HepG2 (cell line): ENCODE measurements at regions of chr10 and their contacts with region 1.

Region 1: GRCh38 chr10:72331601-72332422 is 22.9 kb downstream of the DNAJB12 start:
- DNase-seq: peak; percentile 91
- ATAC-seq: peak; percentile 82
- H3K4me3 ChIP-seq: peak overlapping the region; percentile 13 to 65 (median 22); a peak in 4 of 6 replicates
- H3K27ac ChIP-seq: peak overlapping the region; percentile 91
- H3K4me1 ChIP-seq: peaks cover 95% of the 10 kb centered on the region
- H3K27me3 ChIP-seq: no peaks in the 10 kb centered on the region
- CTCF ChIP-seq: peak; percentile 54
- EP300 ChIP-seq: peak in 1 of 2 experiments; percentile 44; a peak in 1 of 4 replicates
- POLR2A ChIP-seq: no peak
- RAD21 ChIP-seq: no peak

Region 2: DNA sequence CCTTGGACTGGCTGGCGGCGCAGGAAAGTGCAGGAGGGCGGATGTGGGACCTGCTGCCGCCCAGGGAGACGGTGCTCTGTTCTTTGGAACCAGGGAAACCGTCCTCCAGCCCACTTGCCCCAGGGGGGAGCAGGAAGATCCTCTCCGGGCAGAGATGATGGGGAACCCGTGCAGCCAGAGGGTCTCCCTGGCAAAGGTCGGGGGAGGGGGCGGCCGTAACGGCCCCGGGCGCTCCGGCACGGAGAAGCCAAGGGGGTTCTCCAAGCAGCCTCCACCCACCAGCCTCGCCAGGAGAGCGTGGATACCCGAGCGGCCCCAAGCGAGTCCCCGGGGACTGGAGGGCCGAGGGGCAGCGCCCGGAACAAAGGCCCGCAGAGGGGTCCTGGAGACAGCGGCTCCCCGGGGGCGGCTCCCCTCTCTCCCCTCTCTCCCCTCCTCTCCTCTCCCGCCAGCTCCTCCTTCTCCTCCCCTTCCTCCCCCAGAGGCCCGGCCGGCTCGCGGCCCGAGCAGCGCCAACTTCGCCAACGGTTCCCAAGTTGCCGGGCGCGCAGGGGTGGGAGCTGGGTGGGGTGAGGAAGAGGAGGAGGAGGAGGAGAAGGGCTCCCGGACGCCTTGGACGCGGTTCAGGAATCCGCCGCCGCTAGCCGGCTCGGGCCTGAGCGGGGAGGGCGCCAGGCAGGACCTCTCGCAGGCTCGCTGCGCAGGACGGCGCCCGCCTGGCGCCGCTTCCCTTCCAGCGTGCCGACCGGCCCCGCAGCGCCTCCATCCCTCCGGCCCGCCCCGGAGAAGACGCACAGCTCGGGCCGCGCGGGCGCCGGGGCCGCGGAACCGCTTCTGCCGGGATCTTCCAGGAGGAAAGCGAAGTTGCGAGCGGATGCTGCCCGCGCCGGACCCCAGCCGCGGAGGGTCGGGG is 367.8 kb before region 1 on chr10 and contains the start of gene CHST3:
- CTCF ChIA-PET with region 1: no interaction called
- POLR2A ChIA-PET with region 1: no interaction called
- in situ Hi-C with region 1: loop called (anchors 10 kb)
- intact Hi-C with region 1: no loop called
- DNase-seq: no peak
- ATAC-seq: peak; percentile 81
- H3K4me3 ChIP-seq: peak within 1 kb of the TSS; percentile 78 to 95 (median 89)
- H3K27ac ChIP-seq: peak within 1 kb of the TSS; percentile 86
- H3K4me1 ChIP-seq: peaks cover 52% of the 10 kb centered on the region
- H3K27me3 ChIP-seq: peaks cover 0 to 4% of the 10 kb centered on the region in 2 experiments; a peak in 1 of 5 replicates
- CTCF ChIP-seq: no peak
- EP300 ChIP-seq: no peak
- POLR2A ChIP-seq: peak; percentile 7 to 15; a peak in 1 of 4 replicates
- RAD21 ChIP-seq: no peak
- total RNA-seq, gene CHST3: 13.4 and 18.7 TPM in 2 replicates

Region 3: GRCh38 chr10:72088889-72089575 is 242.8 kb before region 1 on chr10:
- CTCF ChIA-PET with region 1: no interaction called
- POLR2A ChIA-PET with region 1: no interaction called
- in situ Hi-C with region 1: loop called (anchors 25 kb)
- intact Hi-C with region 1: no loop called
- DNase-seq: peak; percentile 42
- ATAC-seq: peak; percentile 49
- H3K4me3 ChIP-seq: peak overlapping the region; percentile 51 to 70 (median 57)
- H3K27ac ChIP-seq: no peak overlapping the region
- H3K4me1 ChIP-seq: peaks cover 76% of the 10 kb centered on the region
- H3K27me3 ChIP-seq: peaks cover 0 to 25% of the 10 kb centered on the region in 2 experiments; a peak in 2 of 5 replicates
- CTCF ChIP-seq: no peak
- EP300 ChIP-seq: no peak
- POLR2A ChIP-seq: no peak
- RAD21 ChIP-seq: no peak

Region 4: DNA sequence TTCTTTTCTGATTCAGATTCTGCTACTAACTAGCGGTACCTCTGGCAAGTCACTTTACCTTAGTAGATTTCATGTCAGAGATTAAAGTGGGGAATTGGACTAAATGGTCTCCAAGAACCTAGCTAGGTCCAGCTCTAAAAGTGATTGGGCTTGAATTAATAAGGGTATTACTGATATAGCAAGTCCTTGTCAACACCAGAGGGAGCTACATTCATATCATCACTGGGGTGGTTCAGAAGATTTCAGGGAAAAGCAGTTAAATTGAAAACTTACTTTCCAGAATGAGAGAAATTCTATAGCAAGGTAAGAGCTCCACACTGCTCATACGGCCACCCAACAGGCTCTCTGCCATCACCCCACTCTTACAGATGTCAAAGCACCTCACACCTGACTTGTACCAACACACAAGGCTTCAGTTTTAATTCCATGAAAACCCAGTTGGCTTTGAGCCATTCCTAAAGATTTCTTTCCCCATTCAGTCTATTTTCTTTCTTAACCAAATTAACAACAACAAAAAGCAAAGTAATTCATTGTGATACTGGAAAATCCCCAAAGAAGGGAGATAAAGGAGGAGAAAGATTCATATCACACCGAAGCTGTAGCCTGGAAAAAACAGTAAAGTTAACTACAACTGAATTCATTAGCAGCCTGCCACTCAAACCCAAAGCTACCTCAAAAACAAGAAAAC is 205.5 kb before region 1 on chr10:
- CTCF ChIA-PET with region 1: interaction called, 7 read pairs
- POLR2A ChIA-PET with region 1: interaction called, 4 read pairs
- in situ Hi-C with region 1: no loop called
- intact Hi-C with region 1: loop called (anchors 1 kb)
- DNase-seq: peak; percentile 29
- ATAC-seq: no peak
- H3K4me3 ChIP-seq: no peak overlapping the region
- H3K27ac ChIP-seq: no peak overlapping the region
- H3K4me1 ChIP-seq: no peaks in the 10 kb centered on the region
- H3K27me3 ChIP-seq: no peaks in the 10 kb centered on the region
- CTCF ChIP-seq: peak; percentile 27; the same call in 1 of the 2 replicates
- EP300 ChIP-seq: no peak
- POLR2A ChIP-seq: no peak
- RAD21 ChIP-seq: peak; percentile 34; the same call in 1 of the 2 replicates

Region 5: DNA sequence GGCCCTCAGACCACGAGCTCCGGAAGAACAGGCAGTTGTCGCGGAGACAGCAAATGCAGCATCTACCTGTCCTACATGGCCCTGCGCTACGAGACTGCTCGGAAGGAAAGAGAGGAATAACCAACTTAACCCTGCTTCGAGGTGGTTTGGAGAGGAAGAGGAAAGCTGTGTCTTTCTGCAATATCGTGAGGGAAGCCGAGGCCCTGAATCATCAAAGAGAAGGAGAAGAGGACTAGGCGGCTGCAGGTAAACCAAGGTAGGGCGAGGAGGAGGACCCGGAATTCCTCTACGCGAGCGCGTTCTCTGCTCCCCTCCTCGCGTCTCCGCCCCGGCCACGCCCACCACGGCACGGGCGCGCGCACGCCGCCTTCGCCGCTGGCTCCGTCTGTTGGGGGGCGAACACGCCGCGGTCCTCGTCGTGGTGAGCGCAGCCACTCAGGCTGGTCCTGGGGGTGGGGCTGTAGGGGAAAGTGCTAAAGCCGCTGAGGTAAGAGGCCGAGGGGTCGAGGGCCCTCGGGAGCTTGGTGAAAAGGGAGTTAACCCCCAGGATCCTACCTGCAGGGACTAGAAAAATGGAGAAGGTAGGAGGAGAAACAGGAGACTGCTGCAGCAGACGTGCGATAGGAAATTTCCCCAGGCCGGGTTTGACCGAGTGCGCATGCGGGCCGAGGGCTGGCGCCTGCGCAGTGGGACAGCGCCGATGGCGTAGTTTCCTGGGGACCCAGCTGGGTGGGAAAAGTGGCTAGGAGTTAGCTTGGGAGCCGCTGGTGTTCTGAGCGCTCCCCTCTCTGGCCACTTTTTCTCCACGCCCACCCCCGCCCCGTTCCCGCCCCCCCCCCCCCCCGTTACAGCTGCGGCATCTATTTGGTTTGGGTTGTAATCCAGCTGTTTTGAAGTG is 115.9 kb before region 1 on chr10 and contains the starts of genes ANAPC16 and ASCC1:
- CTCF ChIA-PET with region 1: no interaction called
- POLR2A ChIA-PET with region 1: interaction called, 11 read pairs
- in situ Hi-C with region 1: no loop called
- intact Hi-C with region 1: loop called (anchors 10 kb)
- DNase-seq: peak; percentile 85
- ATAC-seq: peak; percentile 93
- H3K4me3 ChIP-seq: peak within 1 kb of the TSS; percentile 82 to 98 (median 83)
- H3K27ac ChIP-seq: peak within 1 kb of the TSS; percentile 99
- H3K4me1 ChIP-seq: peaks cover 54% of the 10 kb centered on the region
- H3K27me3 ChIP-seq: no peaks in the 10 kb centered on the region
- CTCF ChIP-seq: peak; percentile 27; the same call in 1 of the 2 replicates
- EP300 ChIP-seq: peak; percentile 31 to 61; a peak in 2 of 4 replicates
- POLR2A ChIP-seq: peak; percentile 94 to 96
- RAD21 ChIP-seq: peak; percentile 44; the same call in 1 of the 2 replicates
- total RNA-seq, gene ANAPC16: 74.8 and 95.6 TPM in 2 replicates
- total RNA-seq, gene ASCC1: 30.1 and 51.0 TPM in 2 replicates

Region 6: GRCh38 chr10:72248468-72249151 is 83.2 kb before region 1 on chr10:
- CTCF ChIA-PET with region 1: interaction called, 12 read pairs
- POLR2A ChIA-PET with region 1: interaction called, 8 read pairs
- in situ Hi-C with region 1: no loop called
- intact Hi-C with region 1: no loop called
- DNase-seq: peak; percentile 68
- ATAC-seq: peak; percentile 84
- H3K4me3 ChIP-seq: peak overlapping the region; percentile 56 to 75 (median 65)
- H3K27ac ChIP-seq: peak overlapping the region; percentile 81
- H3K4me1 ChIP-seq: peaks cover 94% of the 10 kb centered on the region
- H3K27me3 ChIP-seq: no peaks in the 10 kb centered on the region
- CTCF ChIP-seq: 0 out of 2 replicates have a peak, but pooled peaks have one; percentile 8
- EP300 ChIP-seq: no peak
- POLR2A ChIP-seq: peak; percentile 88 to 95
- RAD21 ChIP-seq: 0 out of 2 replicates have a peak, but pooled peaks have one; percentile 6

Region 7: DNA sequence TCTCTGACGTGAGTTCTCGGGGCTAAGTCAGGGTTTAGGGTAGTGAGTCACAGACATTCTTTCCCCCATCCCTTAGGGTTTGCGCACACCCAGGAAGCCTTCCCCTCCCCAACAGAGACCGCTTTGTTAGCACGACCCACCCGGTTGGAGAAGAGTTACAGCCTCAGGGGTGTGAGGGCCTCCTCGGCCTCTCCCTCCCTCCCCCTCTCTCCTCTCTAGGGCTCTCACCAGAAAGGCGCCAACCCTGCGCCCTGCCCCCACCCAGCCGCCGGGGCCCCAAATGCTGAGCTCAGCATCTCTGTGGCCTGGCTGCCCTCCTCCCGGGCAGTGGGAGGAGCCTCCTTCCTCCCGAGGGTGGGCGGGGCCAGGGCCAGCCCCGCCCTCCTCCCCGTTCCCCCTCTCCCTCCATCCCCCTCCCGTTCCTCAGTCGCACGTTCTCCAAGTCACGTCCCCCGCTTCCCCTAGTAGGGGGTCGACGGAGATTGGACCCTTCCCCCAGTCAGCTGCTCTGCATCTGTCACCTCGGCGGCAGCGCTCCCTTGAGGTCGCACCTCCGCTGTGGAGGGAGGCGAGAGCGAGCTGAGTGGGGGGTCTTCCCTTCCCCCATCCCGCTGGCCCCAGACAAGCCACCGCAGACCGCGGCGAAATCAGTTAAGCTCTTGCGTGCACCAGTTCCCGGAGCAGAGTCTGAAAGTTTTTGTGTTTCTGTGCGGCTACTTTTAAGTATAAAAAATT is 71.1 kb before region 1 on chr10:
- CTCF ChIA-PET with region 1: no interaction called
- POLR2A ChIA-PET with region 1: interaction called, 6 read pairs
- in situ Hi-C with region 1: no loop called
- intact Hi-C with region 1: loop called (anchors 2 kb)
- DNase-seq: peak; percentile 88
- ATAC-seq: peak; percentile 84
- H3K4me3 ChIP-seq: peak overlapping the region; percentile 50 to 74 (median 61)
- H3K27ac ChIP-seq: peak overlapping the region; percentile 91
- H3K4me1 ChIP-seq: peaks cover 84% of the 10 kb centered on the region
- H3K27me3 ChIP-seq: no peaks in the 10 kb centered on the region
- CTCF ChIP-seq: peak; percentile 85
- EP300 ChIP-seq: peak in 1 of 2 experiments; percentile 56; a peak in 1 of 4 replicates
- POLR2A ChIP-seq: peak; percentile 11 to 55; a peak in 2 of 4 replicates
- RAD21 ChIP-seq: no peak